ENCODE measurements at regions of chr1 and their contacts with region 1.

Region 1: GRCh38 chr1:176857632-176858031 is 306.9 kb downstream of the ASTN1 start:
- DNase-seq: no peak
- H3K4me3 ChIP-seq: no peak overlapping the region
- H3K27ac ChIP-seq: no peak overlapping the region
- H3K4me1 ChIP-seq: no peaks in the 10 kb centered on the region
- H3K27me3 ChIP-seq: no peaks in the 10 kb centered on the region
- CTCF ChIP-seq: no peak
- EP300 ChIP-seq: no peak
- POLR2A ChIP-seq: no peak

Region 2: GRCh38 chr1:176691251-176692228 is 166.1 kb before region 1 on chr1:
- in situ Hi-C with region 1: no loop called
- intact Hi-C with region 1: loop called (anchors 5 kb)
- DNase-seq: peak; percentile 44
- H3K4me3 ChIP-seq: no peak overlapping the region
- H3K27ac ChIP-seq: peak overlapping the region in 3 of 4 donors; percentile 56 to 75 (median 75)
- H3K4me1 ChIP-seq: peaks cover 0 to 6% (median 4%) of the 10 kb centered on the region in 4 donors
- H3K27me3 ChIP-seq: no peaks in the 10 kb centered on the region
- CTCF ChIP-seq: peak; percentile 53 to 60 (median 58)
- EP300 ChIP-seq: no peak
- POLR2A ChIP-seq: no peak